Activated CD4-positive, alpha-beta memory T cell treated with anti-CD3 and anti-CD28 coated beads for 36 hours (primary cell): ENCODE measurements at regions of chr3 and their contacts with region 1.

Region 1: DNA sequence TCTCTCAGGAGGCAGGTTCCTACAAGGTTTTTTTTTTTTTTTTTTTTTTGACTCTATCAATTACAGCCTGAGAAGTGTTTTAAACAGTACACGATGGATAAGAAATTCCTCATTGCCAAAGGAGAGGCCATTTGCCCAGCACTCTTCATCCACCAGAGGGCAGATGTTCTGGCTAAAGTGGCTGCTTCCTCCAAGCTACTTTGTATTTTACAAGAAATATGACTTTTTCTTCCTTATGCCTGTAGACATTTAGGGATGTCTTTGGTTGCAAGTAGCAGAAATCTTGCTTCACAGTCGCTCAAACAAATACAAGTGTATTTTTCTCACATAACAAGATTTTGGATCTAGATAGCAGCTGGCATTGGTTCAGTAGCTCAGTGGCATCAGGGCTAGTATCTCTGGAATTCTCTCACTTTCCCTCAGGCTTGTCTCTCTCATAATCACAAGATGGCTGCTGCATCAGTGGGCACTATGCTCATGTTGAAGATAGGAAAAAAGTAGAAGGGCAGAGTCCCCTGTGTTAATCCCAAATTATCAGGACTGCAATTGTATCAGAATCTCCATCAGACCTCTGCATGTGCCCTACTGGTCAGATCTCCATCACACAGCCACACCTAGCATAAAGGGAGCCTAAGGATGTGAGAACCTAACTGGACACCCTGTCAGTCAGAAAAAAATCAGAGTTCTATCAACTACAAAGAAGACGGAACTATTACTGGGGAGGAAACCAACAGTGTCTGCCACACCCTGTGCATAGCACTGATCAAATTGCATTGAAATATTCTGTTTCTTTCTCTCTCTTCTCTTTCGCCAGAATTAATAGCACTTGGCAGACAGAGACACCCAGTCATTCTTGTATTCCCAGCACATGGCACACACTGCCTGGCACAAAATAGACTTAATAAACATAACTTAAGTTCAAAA is 138.9 kb upstream of the COL8A1 start:
- DNase-seq: peak; percentile 15
- H3K4me3 Mint-ChIP-seq: no peak overlapping the region
- H3K27ac Mint-ChIP-seq: no peak overlapping the region
- H3K4me1 Mint-ChIP-seq: no peaks in the 10 kb centered on the region
- H3K27me3 Mint-ChIP-seq: no peaks in the 10 kb centered on the region

Region 2: GRCh38 chr3:99191186-99191585 is 308.3 kb before region 1 on chr3:
- CTCF ChIA-PET with region 1: no interaction called
- POLR2A ChIA-PET with region 1: no interaction called
- intact Hi-C with region 1: no loop called
- DNase-seq: no peak
- H3K4me3 Mint-ChIP-seq: no peak overlapping the region
- H3K27ac Mint-ChIP-seq: no peak overlapping the region
- H3K4me1 Mint-ChIP-seq: no peaks in the 10 kb centered on the region
- H3K27me3 Mint-ChIP-seq: no peaks in the 10 kb centered on the region

Region 3: GRCh38 chr3:99686955-99687612 is 187.6 kb after region 1 on chr3:
- CTCF ChIA-PET with region 1: interaction called, 3 read pairs
- POLR2A ChIA-PET with region 1: no interaction called
- intact Hi-C with region 1: loop called (anchors 5 kb)
- DNase-seq: peak; percentile 58
- H3K4me3 Mint-ChIP-seq: no peak overlapping the region
- H3K27ac Mint-ChIP-seq: no peak overlapping the region
- H3K4me1 Mint-ChIP-seq: no peaks in the 10 kb centered on the region
- H3K27me3 Mint-ChIP-seq: peaks cover 13% of the 10 kb centered on the region